ENCODE measurements at regions of chr1 and their contacts with region 1.

Region 1: DNA sequence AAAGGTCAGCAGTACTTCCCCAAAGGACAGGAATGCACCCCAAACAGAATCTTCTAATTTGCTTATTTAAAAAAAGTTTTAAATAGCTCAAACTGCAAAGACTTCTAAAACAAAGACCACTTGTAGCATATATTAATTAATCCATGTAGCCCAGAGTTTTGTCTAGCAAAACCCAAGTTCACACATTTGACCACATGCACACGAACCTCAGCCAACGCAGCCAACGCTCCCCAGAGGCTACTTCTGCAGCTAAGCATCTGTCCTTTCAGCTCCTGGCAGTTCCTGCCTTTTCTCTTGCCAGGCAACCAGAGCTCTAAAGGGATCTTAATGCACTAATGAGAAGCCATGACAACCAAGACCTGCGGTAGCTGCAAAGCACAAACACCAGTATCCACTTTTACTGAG is 89.6 kb downstream of the RERE start:
- DNase-seq: no peak
- H3K4me3 ChIP-seq: no peak overlapping the region
- H3K4me3 Mint-ChIP-seq: no peak overlapping the region
- H3K27ac ChIP-seq: no peak overlapping the region
- H3K27ac Mint-ChIP-seq: no peak overlapping the region
- H3K4me1 ChIP-seq: peaks cover 7% of the 10 kb centered on the region
- H3K4me1 Mint-ChIP-seq: peaks cover 3 to 12% (median 6%) of the 10 kb centered on the region in 4 donors
- H3K27me3 ChIP-seq: no peaks in the 10 kb centered on the region
- H3K27me3 Mint-ChIP-seq: no peaks in the 10 kb centered on the region

Region 2: GRCh38 chr1:7026169-7026568 is 1701.6 kb before region 1 on chr1:
- CTCF ChIA-PET with region 1: no interaction called
- POLR2A ChIA-PET with region 1: no interaction called
- intact Hi-C with region 1: no loop called
- DNase-seq: no peak
- H3K4me3 ChIP-seq: no peak overlapping the region
- H3K4me3 Mint-ChIP-seq: no peak overlapping the region
- H3K27ac ChIP-seq: no peak overlapping the region
- H3K27ac Mint-ChIP-seq: no peak overlapping the region
- H3K4me1 ChIP-seq: no peaks in the 10 kb centered on the region
- H3K4me1 Mint-ChIP-seq: no peaks in the 10 kb centered on the region
- H3K27me3 ChIP-seq: no peaks in the 10 kb centered on the region
- H3K27me3 Mint-ChIP-seq: peaks cover 2 to 5% of the 10 kb centered on the region in 2 donors

Region 3: GRCh38 chr1:7869136-7869905 is 858.5 kb before region 1 on chr1:
- CTCF ChIA-PET with region 1: no interaction called
- POLR2A ChIA-PET with region 1: no interaction called
- intact Hi-C with region 1: no loop called
- DNase-seq: no peak
- H3K4me3 ChIP-seq: no peak overlapping the region
- H3K4me3 Mint-ChIP-seq: no peak overlapping the region
- H3K27ac ChIP-seq: no peak overlapping the region
- H3K27ac Mint-ChIP-seq: no peak overlapping the region
- H3K4me1 ChIP-seq: no peaks in the 10 kb centered on the region
- H3K4me1 Mint-ChIP-seq: no peaks in the 10 kb centered on the region
- H3K27me3 ChIP-seq: no peaks in the 10 kb centered on the region
- H3K27me3 Mint-ChIP-seq: peaks cover 2% of the 10 kb centered on the region in 2 donors

Region 4: DNA sequence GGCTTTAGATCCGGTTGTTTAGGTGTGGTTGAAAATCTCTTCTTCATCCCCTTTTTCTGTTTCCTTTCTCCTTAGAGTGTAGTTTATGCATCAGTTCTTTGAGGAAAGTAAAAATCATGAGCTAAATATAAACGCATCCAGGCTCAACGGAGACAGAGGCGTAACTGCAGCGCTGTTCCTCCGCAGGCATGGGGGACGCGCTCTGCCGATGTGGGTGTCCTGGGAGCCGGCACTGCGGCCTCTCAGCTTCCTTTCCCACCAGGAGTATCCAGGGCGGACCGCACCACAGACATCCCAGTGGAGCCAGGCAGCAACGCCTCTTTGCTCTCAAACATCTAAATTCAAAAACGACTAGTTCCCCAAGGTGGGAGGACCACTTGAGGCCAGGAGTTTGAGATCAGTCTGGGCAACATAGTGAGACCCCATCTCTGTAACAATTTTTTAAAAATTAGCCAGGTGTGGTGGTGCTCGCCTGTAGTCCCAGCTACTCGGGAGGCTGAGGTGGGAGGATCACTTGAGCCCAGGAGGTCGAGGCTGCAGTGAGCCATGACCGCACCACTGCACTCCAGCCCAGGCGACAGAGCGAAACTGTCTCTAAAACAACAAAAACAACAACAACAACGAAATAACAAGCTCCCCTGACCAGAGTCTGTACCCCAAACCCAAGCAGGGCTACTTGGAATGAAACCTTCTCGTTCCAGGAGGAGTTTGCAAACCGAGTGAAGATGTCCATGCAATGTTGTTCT is 393.5 kb before region 1 on chr1:
- CTCF ChIA-PET with region 1: no interaction called
- POLR2A ChIA-PET with region 1: no interaction called
- intact Hi-C with region 1: no loop called
- DNase-seq: no peak
- H3K4me3 ChIP-seq: no peak overlapping the region
- H3K4me3 Mint-ChIP-seq: no peak overlapping the region
- H3K27ac ChIP-seq: no peak overlapping the region
- H3K27ac Mint-ChIP-seq: no peak overlapping the region
- H3K4me1 ChIP-seq: no peaks in the 10 kb centered on the region
- H3K4me1 Mint-ChIP-seq: no peaks in the 10 kb centered on the region
- H3K27me3 ChIP-seq: no peaks in the 10 kb centered on the region
- H3K27me3 Mint-ChIP-seq: no peaks in the 10 kb centered on the region

Region 5: GRCh38 chr1:8554956-8555534 is 172.8 kb before region 1 on chr1:
- CTCF ChIA-PET with region 1: interaction called, 28 read pairs
- POLR2A ChIA-PET with region 1: no interaction called
- intact Hi-C with region 1: no loop called
- DNase-seq: no peak
- H3K4me3 ChIP-seq: no peak overlapping the region
- H3K4me3 Mint-ChIP-seq: no peak overlapping the region
- H3K27ac ChIP-seq: no peak overlapping the region
- H3K27ac Mint-ChIP-seq: peak overlapping the region in 1 of 7 donors; percentile 19
- H3K4me1 ChIP-seq: no peaks in the 10 kb centered on the region
- H3K4me1 Mint-ChIP-seq: peaks cover 0 to 13% (median 6%) of the 10 kb centered on the region in 4 donors
- H3K27me3 ChIP-seq: no peaks in the 10 kb centered on the region
- H3K27me3 Mint-ChIP-seq: no peaks in the 10 kb centered on the region

Region 6: DNA sequence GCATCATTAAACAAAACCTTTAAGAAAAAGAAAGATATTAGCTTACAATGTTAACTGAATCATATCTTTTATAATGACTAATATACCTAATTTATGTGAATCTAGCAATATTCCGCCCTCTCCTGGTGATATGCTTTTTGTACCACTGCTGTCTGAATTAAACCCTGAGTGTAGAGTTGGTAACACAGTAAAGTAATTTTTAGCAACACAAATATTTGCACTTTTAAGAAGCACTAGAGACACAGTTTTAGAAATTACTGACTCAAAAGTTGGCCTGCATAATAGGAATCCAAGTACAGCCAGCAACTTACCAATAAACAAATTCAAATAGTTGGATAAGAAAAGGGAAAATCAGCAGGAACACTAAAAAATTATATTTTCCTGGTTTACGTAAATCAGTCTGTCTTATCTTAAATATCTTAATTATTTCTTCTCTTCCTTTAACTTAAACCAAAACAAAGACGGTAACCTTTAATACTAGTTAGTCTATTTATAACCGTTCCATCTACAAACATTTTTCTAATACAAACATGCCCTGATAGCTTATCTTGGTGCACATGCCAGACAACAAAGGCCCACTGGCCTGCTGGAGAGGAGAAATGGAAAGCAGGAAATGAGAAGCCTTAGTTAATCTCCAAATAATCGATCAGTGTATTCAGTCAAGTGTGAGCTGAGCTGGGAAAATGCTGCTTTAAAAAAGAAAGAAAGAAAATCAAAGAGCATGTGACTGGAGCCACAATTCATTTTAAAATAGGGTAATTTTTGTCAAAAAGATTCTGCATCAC is 156.4 kb before region 1 on chr1:
- CTCF ChIA-PET with region 1: interaction called, 192 read pairs
- POLR2A ChIA-PET with region 1: no interaction called
- intact Hi-C with region 1: no loop called
- DNase-seq: no peak
- H3K4me3 ChIP-seq: no peak overlapping the region
- H3K4me3 Mint-ChIP-seq: no peak overlapping the region
- H3K27ac ChIP-seq: no peak overlapping the region
- H3K27ac Mint-ChIP-seq: no peak overlapping the region
- H3K4me1 ChIP-seq: no peaks in the 10 kb centered on the region
- H3K4me1 Mint-ChIP-seq: no peaks in the 10 kb centered on the region
- H3K27me3 ChIP-seq: no peaks in the 10 kb centered on the region
- H3K27me3 Mint-ChIP-seq: no peaks in the 10 kb centered on the region

Region 7: GRCh38 chr1:8671306-8671917 is 56.4 kb before region 1 on chr1:
- CTCF ChIA-PET with region 1: interaction called, 19 read pairs
- POLR2A ChIA-PET with region 1: no interaction called
- intact Hi-C with region 1: no loop called
- DNase-seq: peak in 4 of 5 donors; percentile 12 to 34 (median 25)
- H3K4me3 ChIP-seq: no peak overlapping the region
- H3K4me3 Mint-ChIP-seq: no peak overlapping the region
- H3K27ac ChIP-seq: no peak overlapping the region
- H3K27ac Mint-ChIP-seq: peak overlapping the region in 1 of 7 donors; percentile 60
- H3K4me1 ChIP-seq: peaks cover 24% of the 10 kb centered on the region
- H3K4me1 Mint-ChIP-seq: peaks cover 15 to 31% (median 20%) of the 10 kb centered on the region in 4 donors
- H3K27me3 ChIP-seq: no peaks in the 10 kb centered on the region
- H3K27me3 Mint-ChIP-seq: no peaks in the 10 kb centered on the region